GM13976 (cell line): ENCODE measurements at regions of chr4 and their contacts with region 1.

Region 1: GRCh38 chr4:108834835-108835384 is 72.1 kb upstream of the ETNPPL start:
- DNase-seq: peak; percentile 10
- CTCF ChIP-seq: peak; percentile 23

Region 2: DNA sequence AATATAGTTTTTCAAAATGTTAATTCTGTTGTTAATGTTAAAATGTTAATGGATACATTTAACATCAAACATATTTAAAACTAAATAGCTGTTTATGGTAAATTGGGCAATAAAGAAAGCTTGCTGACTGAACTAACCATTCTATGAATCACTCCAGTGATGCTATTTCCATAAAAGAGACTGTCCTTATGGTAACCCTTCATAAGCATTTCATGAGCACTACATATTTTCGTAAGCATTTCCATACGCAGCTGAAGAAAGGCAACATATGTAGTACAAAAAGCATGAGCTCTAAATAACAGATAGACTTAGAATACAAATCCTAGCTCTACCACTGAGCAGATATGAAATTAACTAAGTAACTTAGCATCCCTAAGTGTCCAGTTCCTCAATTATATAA is 278.6 kb after region 1 on chr4:
- in situ Hi-C with region 1: no loop called
- DNase-seq: no peak
- CTCF ChIP-seq: no peak

Region 3: DNA sequence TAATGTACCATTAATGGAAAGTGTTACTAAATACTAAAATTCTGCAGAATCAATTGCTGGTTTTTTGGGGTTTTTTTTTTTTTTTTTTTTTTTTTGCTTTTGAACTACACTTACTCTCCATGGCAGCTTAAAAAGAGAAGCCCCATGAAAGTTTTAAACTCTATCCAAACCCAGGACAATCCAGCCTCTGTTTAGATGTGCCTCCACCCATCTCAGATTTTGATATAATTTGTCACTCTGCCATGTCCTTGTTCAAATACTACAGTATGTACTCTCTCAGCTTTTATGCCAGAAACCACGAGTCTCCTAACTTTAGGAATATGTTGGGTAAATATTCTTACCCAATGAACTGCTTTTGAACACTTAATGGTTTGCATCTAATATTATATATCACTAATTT is 383.4 kb after region 1 on chr4:
- in situ Hi-C with region 1: no loop called
- DNase-seq: no peak
- CTCF ChIP-seq: no peak

Region 4: DNA sequence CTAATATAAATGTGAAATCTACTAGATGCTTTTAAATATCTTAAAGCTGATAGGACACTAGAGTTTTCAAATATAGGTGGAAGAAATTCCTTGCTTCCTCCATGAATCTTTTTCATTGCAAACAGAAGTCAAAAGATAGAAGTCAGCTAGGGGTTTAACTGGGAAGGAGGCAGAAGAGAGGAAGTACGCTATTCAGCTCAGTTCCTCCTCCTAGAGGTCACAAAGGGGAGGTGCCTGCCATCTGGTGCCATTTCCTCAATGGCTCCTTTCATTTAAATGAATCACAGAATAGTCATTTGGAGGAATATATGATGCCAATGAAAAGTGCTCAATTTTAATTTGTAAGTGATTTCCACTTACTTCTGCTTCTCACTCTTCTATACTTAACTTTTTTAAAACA is 459.1 kb after region 1 on chr4:
- in situ Hi-C with region 1: loop called (anchors 25 kb)
- DNase-seq: no peak
- CTCF ChIP-seq: peak; percentile 25

Region 5: GRCh38 chr4:109406338-109406931 is 571.5 kb after region 1 on chr4:
- in situ Hi-C with region 1: loop called (anchors 25 kb)
- DNase-seq: peak; percentile 50
- CTCF ChIP-seq: peak; percentile 50